SK-MEL-5 (cell line): ENCODE measurements at regions of chrX and their contacts with region 1.

Region 1: DNA sequence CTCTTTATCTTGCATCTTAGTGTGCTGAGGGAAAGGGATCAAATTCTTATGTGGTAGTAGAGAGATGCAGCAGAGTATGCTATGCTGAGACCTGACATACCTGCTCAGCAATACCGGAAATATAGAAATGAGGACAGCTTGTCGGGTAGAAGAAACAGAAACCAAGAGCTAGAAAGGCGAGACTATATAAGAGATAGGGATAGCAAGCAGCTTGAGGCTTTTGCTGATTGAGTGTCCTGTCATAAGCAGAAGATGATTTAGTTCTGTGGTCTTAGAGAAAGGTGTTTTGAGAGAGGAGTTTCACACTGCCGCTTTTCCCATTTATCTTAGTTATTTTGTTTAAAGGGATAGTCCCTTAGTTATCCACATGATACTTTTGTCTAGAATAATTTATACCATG is 31.7 kb downstream of the USP9X start:
- DNase-seq: no peak

Region 2: GRCh38 chrX:40887476-40887875 is 229.5 kb before region 1 on chrX:
- in situ Hi-C with region 1: loop called (anchors 10 kb)
- DNase-seq: no peak

Region 3: DNA sequence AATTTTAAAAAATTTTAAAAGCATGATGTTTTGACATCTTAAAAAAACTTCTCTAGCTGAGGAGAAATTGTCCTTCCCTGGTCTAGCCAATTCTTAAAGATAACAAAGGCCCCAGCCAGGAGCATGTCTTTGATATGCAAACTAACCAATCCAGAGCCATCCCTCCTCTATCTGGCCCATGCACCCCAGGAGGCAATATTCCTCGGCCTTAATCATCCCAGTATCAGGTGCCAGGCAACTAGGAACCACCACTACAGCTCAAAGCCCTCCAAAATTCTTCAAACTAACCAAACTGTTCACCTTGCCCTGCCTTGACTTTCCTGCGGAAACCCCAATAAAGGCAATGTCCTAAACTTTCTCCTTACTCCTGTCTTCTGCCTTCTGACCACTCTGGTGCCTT is 129.5 kb before region 1 on chrX:
- in situ Hi-C with region 1: no loop called
- DNase-seq: no peak